CD4-positive, alpha-beta T cell (primary cell): ENCODE measurements at regions of chr10 and their contacts with region 1.

Region 1: GRCh38 chr10:98446661-98447221 is at the start of gene HPS1:
- DNase-seq: peak; percentile 58 to 88 (median 75)
- ATAC-seq: peak; percentile 91
- H3K4me3 ChIP-seq: peak within 1 kb of the TSS; percentile 71
- H3K4me3 Mint-ChIP-seq: peak within 1 kb of the TSS; percentile 94
- H3K27ac ChIP-seq: peak within 1 kb of the TSS; percentile 66 to 77
- H3K27ac Mint-ChIP-seq: peak within 1 kb of the TSS; percentile 93
- H3K4me1 ChIP-seq: peaks cover 41% of the 10 kb centered on the region
- H3K4me1 Mint-ChIP-seq: peaks cover 40% of the 10 kb centered on the region
- H3K27me3 ChIP-seq: no peaks in the 10 kb centered on the region
- H3K27me3 Mint-ChIP-seq: peaks cover 1% of the 10 kb centered on the region
- CTCF ChIP-seq: no peak
- total RNA-seq, gene HPS1: 49.8 to 50.5 TPM

Region 2: GRCh38 chr10:98391578-98391991 is 55.2 kb before region 1 on chr10:
- CTCF ChIA-PET with region 1: no interaction called
- POLR2A ChIA-PET with region 1: no interaction called
- intact Hi-C with region 1: no loop called
- DNase-seq: peak in 2 of 14 experiments; percentile 6 to 64
- ATAC-seq: no peak
- H3K4me3 ChIP-seq: no peak overlapping the region
- H3K4me3 Mint-ChIP-seq: no peak overlapping the region
- H3K27ac ChIP-seq: no peak overlapping the region
- H3K27ac Mint-ChIP-seq: no peak overlapping the region
- H3K4me1 ChIP-seq: peaks cover 27% of the 10 kb centered on the region
- H3K4me1 Mint-ChIP-seq: peaks cover 19% of the 10 kb centered on the region
- H3K27me3 ChIP-seq: no peaks in the 10 kb centered on the region
- H3K27me3 Mint-ChIP-seq: no peaks in the 10 kb centered on the region
- CTCF ChIP-seq: no peak

Region 3: DNA sequence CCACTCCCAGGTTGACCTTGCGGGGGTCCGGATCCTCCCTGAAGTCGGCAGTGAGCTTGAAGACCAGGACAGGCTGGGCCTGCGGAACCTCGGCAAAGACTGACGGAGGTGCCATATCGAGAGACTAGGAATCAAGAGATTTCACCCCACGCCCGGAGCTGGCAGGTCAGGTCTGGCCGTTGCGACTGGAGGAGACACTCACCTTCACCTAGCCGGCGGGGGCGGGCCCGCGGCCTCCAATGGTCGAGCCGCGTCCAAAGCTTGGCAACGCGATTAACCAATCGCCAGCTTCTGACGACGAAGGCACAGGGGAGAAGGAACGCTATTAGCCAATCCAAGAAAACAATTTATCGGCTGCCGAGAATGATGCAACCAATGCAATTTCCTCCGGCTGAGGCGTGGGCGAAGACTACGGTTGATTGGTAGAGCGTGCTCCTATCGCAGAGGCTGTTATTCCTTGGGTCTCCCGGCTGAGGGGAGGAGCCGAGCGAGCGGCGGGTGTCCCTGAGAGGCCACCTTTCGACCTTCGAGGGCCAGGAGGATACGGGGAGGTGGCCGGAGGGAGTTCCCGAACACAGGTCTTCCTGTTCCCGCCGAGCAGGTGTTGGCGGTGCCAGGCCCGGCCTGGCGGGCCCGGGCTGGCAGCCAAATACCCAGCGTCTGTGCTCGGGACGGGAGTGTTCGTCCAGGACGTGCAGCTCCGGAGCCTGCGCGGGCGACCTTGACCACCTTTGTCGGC is 983.9 kb after region 1 on chr10 and contains the start of gene GOT1:
- CTCF ChIA-PET with region 1: no interaction called
- POLR2A ChIA-PET with region 1: no interaction called
- intact Hi-C with region 1: loop called in 1 of 2 experiments (anchors 5 kb)
- DNase-seq: peak; percentile 79 to 98 (median 87)
- ATAC-seq: peak; percentile 93
- H3K4me3 ChIP-seq: peak within 1 kb of the TSS; percentile 93
- H3K4me3 Mint-ChIP-seq: peak within 1 kb of the TSS; percentile 91
- H3K27ac ChIP-seq: peak within 1 kb of the TSS; percentile 52 to 67
- H3K27ac Mint-ChIP-seq: peak within 1 kb of the TSS; percentile 95
- H3K4me1 ChIP-seq: peaks cover 17% of the 10 kb centered on the region
- H3K4me1 Mint-ChIP-seq: peaks cover 47% of the 10 kb centered on the region
- H3K27me3 ChIP-seq: no peaks in the 10 kb centered on the region
- H3K27me3 Mint-ChIP-seq: no peaks in the 10 kb centered on the region
- CTCF ChIP-seq: no peak
- total RNA-seq, gene GOT1: 3.5 to 5.7 TPM

Region 4: GRCh38 chr10:100185364-100186252 is 1738.9 kb after region 1 on chr10 and contains the start of gene ERLIN1:
- CTCF ChIA-PET with region 1: no interaction called
- POLR2A ChIA-PET with region 1: no interaction called
- intact Hi-C with region 1: loop called in 1 of 2 experiments (anchors 10 kb)
- DNase-seq: peak; percentile 82 to 96 (median 90)
- ATAC-seq: peak; percentile 92
- H3K4me3 ChIP-seq: peak within 1 kb of the TSS; percentile 80
- H3K4me3 Mint-ChIP-seq: peak within 1 kb of the TSS; percentile 98
- H3K27ac ChIP-seq: peak within 1 kb of the TSS; percentile 72 to 81
- H3K27ac Mint-ChIP-seq: peak within 1 kb of the TSS; percentile 92
- H3K4me1 ChIP-seq: peaks cover 22% of the 10 kb centered on the region
- H3K4me1 Mint-ChIP-seq: peaks cover 73% of the 10 kb centered on the region
- H3K27me3 ChIP-seq: no peaks in the 10 kb centered on the region
- H3K27me3 Mint-ChIP-seq: no peaks in the 10 kb centered on the region
- CTCF ChIP-seq: no peak
- total RNA-seq, gene ERLIN1: 1.5 to 2.9 TPM